Activated B cell treated with CpG ODN at 0.5 μM for 24 hours (primary cell): ENCODE measurements at regions of chr16 and their contacts with region 1.

Region 1: GRCh38 chr16:71894921-71895678 is at the start of gene IST1:
- DNase-seq: peak; percentile 91
- ATAC-seq: peak; percentile 90
- H3K4me3 Mint-ChIP-seq: peak within 1 kb of the TSS; percentile 96
- H3K27ac Mint-ChIP-seq: peak within 1 kb of the TSS; percentile 94
- H3K4me1 Mint-ChIP-seq: peaks cover 30% of the 10 kb centered on the region
- H3K27me3 Mint-ChIP-seq: no peaks in the 10 kb centered on the region
- CTCF ChIP-seq: no peak
- total RNA-seq, gene IST1: 199 and 206 TPM in 2 replicates

Region 2: GRCh38 chr16:71723537-71724319 is 171.4 kb before region 1 on chr16:
- CTCF ChIA-PET with region 1: no interaction called
- POLR2A ChIA-PET with region 1: interaction called, 4 read pairs
- intact Hi-C with region 1: loop called (anchors 2 kb)
- DNase-seq: peak; percentile 87
- ATAC-seq: peak; percentile 80
- H3K4me3 Mint-ChIP-seq: peak overlapping the region; percentile 85
- H3K27ac Mint-ChIP-seq: peak overlapping the region; percentile 85
- H3K4me1 Mint-ChIP-seq: peaks cover 50% of the 10 kb centered on the region
- H3K27me3 Mint-ChIP-seq: no peaks in the 10 kb centered on the region
- CTCF ChIP-seq: no peak

Region 3: DNA sequence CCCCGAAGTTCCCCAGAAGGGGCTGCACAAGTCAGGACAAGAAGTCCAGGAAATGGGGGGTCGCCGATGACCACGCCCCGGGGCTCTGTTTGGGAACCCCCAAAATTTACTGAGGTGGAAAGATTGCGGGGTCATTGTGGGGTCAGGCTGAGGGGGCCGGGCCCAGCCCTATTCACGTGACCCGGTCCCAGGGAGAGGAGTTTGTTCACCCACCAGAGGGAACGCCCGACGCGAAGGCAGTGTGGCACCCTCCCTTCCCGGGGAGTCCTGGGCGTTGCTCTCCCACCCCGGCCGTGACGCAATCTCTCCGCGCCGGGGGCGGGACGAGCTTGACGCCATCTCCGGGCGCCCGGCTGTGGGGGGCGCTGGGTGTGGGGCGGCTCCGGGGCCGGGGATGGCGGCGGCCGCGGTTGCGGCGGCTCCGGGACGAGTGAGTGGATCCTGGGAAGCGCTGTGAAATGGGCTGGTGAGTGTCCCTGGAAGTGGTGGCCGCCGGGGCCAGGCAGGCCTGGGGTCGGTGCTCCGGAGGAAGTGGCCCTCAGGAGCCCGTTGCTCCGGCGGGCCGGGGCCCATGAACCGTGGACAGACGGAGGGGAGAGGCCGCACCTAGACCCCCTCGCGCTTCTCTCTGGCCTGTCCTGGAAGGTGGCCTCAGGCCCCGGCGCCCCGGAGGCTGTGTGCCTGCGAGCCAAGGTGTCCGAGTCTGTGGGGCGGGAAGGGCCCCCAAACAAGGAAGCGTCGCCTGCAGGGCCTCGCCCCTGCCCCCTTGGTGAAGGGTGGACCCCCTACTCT is 49.3 kb before region 1 on chr16 and contains the start of gene ATXN1L:
- CTCF ChIA-PET with region 1: no interaction called
- POLR2A ChIA-PET with region 1: interaction called, 4 read pairs
- intact Hi-C with region 1: loop called (anchors 1 kb)
- DNase-seq: peak; percentile 99
- ATAC-seq: peak; percentile 89
- H3K4me3 Mint-ChIP-seq: peak within 1 kb of the TSS; percentile 92
- H3K27ac Mint-ChIP-seq: peak within 1 kb of the TSS; percentile 98
- H3K4me1 Mint-ChIP-seq: peaks cover 51% of the 10 kb centered on the region
- H3K27me3 Mint-ChIP-seq: no peaks in the 10 kb centered on the region
- CTCF ChIP-seq: no peak
- total RNA-seq, gene ATXN1L: 24.9 and 28.3 TPM in 2 replicates

Region 4: GRCh38 chr16:71859762-71860521 is 35.2 kb before region 1 on chr16:
- CTCF ChIA-PET with region 1: no interaction called
- POLR2A ChIA-PET with region 1: no interaction called
- intact Hi-C with region 1: no loop called
- DNase-seq: no peak
- ATAC-seq: no peak
- H3K4me3 Mint-ChIP-seq: no peak overlapping the region
- H3K27ac Mint-ChIP-seq: no peak overlapping the region
- H3K4me1 Mint-ChIP-seq: peaks cover 10% of the 10 kb centered on the region
- H3K27me3 Mint-ChIP-seq: no peaks in the 10 kb centered on the region
- CTCF ChIP-seq: no peak

Region 5: DNA sequence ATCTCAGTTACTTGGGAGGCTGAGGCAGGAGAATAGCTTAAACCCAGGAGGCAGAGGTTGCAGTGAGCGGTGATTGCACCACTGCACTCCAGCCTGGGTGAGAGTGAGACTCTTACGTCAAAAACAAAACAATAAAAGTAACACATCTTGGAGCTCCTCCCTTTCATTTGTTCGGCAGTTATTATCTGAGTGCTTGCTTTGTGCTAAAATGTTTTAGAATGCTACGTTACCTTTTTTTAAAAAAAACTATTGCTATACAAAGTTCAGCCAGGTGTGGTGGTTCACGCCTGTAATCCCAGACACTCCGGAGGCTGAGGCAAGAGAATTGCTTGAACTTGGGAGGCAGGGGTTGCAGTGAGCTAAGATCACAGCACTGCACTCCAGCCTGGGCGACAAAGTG is 16.0 kb after region 1 on chr16:
- CTCF ChIA-PET with region 1: interaction called, 3 read pairs
- POLR2A ChIA-PET with region 1: interaction called, 6 read pairs
- intact Hi-C with region 1: loop called (anchors 2 kb)
- DNase-seq: no peak
- ATAC-seq: no peak
- H3K4me3 Mint-ChIP-seq: no peak overlapping the region
- H3K27ac Mint-ChIP-seq: no peak overlapping the region
- H3K4me1 Mint-ChIP-seq: peaks cover 71% of the 10 kb centered on the region
- H3K27me3 Mint-ChIP-seq: no peaks in the 10 kb centered on the region
- CTCF ChIP-seq: no peak

Region 6: DNA sequence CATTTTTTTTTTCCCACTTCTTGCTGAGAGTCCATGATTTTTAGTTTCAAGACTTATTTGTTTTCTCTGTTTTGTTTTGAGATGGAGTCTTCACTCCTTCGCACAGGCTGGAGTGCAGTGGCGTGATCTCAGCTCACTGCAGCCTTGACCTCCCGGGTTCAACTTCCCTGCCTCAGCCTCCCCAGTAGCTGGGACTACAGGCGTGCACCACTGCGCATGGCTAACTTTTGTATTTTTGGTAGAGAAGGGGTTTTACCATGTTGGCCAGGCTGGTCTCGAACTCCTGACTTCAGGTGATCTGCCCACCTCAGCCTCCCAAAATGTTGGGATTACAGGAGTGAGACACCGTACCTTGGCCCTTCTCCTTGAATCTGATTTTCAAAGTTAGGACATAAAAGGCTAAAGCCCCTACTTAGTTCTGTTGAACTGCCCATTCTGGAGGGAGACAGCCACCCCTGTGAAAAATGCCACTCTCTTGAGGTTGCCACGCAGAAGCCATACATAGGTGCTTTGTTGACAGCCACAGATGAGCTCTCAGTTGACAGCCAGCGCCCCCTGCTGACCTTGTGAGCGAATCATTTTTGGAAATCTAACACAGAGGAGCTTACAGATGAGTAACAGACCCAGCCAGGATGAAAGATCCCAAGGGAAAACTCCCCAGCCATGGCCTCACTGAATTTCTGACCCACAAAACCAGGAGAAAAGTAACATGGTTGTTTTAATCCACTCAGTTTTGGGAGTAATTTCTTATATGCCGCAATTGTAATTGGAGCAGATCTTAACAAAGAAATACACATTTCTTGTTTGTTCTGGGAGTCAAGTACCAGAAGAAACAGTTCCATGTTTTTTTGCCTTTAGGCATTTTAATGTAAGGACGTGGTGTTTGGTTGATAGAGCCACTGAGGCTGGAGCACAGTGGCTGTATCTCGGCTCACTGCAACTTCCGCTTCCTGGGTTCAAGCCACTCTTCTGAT is 66.3 kb after region 1 on chr16:
- CTCF ChIA-PET with region 1: interaction called, 3 read pairs
- POLR2A ChIA-PET with region 1: interaction called, 4 read pairs
- intact Hi-C with region 1: loop called (anchors 2 kb)
- DNase-seq: peak; percentile 63
- ATAC-seq: peak; percentile 89
- H3K4me3 Mint-ChIP-seq: no peak overlapping the region
- H3K27ac Mint-ChIP-seq: no peak overlapping the region
- H3K4me1 Mint-ChIP-seq: peaks cover 27% of the 10 kb centered on the region
- H3K27me3 Mint-ChIP-seq: peaks cover 3% of the 10 kb centered on the region
- CTCF ChIP-seq: no peak

Region 7: GRCh38 chr16:72093448-72094265 is 198.6 kb after region 1 on chr16 and contains the starts of genes DHX38 and TXNL4B:
- CTCF ChIA-PET with region 1: no interaction called
- POLR2A ChIA-PET with region 1: no interaction called
- intact Hi-C with region 1: loop called (anchors 5 kb)
- DNase-seq: peak; percentile 77
- ATAC-seq: peak; percentile 96
- H3K4me3 Mint-ChIP-seq: peak within 1 kb of the TSS; percentile 99
- H3K27ac Mint-ChIP-seq: peak within 1 kb of the TSS; percentile 96
- H3K4me1 Mint-ChIP-seq: peaks cover 47% of the 10 kb centered on the region
- H3K27me3 Mint-ChIP-seq: no peaks in the 10 kb centered on the region
- CTCF ChIP-seq: no peak
- total RNA-seq, gene DHX38: 107 and 118 TPM in 2 replicates
- total RNA-seq, gene TXNL4B: 13.1 and 13.8 TPM in 2 replicates